ENCODE measurements at regions of chr18 and their contacts with region 1.

Region 1: GRCh38 chr18:6482198-6482977 is 67.7 kb upstream of the L3MBTL4 start:
- DNase-seq: no peak
- H3K4me3 ChIP-seq: no peak overlapping the region
- H3K27ac ChIP-seq: no peak overlapping the region
- H3K4me1 ChIP-seq: peaks cover 2% of the 10 kb centered on the region
- H3K27me3 ChIP-seq: peaks cover 2% of the 10 kb centered on the region
- CTCF ChIP-seq: peak in 2 of 4 experiments; percentile 43 to 51
- POLR2A ChIP-seq: no peak

Region 2: GRCh38 chr18:5879479-5879882 is 602.9 kb before region 1 on chr18:
- intact Hi-C with region 1: loop called (anchors 2 kb)
- DNase-seq: no peak
- H3K4me3 ChIP-seq: no peak overlapping the region
- H3K27ac ChIP-seq: no peak overlapping the region
- H3K4me1 ChIP-seq: no peaks in the 10 kb centered on the region
- H3K27me3 ChIP-seq: no peaks in the 10 kb centered on the region
- CTCF ChIP-seq: peak; percentile 16 to 71 (median 64)
- POLR2A ChIP-seq: no peak